HEK293T (cell line): ENCODE measurements at regions of chr16 and their contacts with region 1.

Region 1: GRCh38 chr16:2867987-2868789 is 10.2 kb upstream of the PRSS22 start:
- DNase-seq: peak; percentile 95

Region 2: DNA sequence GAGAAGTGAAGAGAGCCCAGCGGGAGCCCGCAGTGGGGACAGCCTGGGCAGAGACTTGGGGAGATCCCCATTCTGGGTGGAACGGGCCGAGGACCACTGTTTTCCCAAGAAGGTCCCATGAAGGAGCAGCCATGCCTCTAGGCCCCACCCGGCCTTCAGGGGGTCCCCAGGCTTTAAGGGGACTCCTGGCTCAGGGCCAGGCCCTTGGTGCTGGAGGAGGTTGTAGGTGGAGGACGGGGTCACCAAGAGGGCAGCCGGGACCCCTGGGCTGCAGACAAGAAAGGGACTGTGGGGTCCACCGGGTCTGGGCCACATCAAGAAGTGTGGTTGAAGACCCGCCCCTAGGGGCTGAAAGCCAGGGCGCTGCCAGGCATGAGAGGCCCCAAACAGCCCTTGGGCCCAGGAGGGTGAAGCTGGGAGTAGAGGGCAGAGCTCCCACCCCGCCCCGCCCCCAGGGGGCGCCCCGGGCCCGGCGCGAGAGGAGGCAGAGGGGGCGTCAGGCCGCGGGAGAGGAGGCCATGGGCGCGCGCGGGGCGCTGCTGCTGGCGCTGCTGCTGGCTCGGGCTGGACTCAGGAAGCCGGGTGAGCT is 51.3 kb before region 1 on chr16 and contains the start of gene PRSS21:
- CTCF ChIA-PET with region 1: no interaction called
- POLR2A ChIA-PET with region 1: no interaction called
- DNase-seq: no peak

Region 3: GRCh38 chr16:2838928-2839327 is 29.3 kb before region 1 on chr16:
- CTCF ChIA-PET with region 1: interaction called, 17 read pairs
- POLR2A ChIA-PET with region 1: interaction called, 30 read pairs
- DNase-seq: peak; percentile 75

Region 4: DNA sequence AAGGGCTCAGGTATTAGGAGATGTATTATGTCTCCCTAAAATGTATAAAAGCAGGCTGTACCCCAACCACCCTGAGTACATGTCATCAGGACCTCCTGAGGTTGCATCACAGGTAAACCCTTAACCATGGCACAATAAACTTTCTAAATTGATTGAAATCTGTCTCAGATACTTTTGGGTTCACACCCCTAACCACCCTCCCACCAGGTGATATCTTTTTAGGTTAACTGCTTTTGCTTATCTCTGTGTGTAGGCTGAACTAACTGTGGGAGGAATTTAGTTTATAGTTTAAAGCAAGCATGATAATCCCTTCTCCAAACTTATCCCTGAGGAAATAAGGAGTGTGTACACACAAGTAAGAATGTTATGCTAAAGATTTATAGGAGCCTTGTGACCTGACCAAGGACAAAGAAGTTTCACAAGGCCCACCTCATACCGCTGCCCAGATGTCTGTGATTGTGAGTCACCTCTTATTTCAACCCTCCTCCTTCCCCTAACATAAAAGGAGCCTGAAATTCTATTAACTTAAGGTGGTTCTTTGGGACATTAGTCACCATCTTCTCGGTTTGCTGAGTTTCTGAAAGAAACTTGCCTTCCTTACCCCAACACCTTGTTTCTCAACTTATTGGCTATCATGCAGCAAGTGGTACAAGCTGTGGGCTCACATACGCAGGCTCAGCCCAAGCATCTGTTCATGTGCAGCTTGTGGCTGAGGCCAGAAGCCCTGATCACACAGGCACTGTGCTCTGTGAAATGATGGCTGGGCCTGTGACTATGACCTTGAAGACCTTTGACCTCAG is 21.5 kb before region 1 on chr16:
- CTCF ChIA-PET with region 1: interaction called, 4 read pairs
- POLR2A ChIA-PET with region 1: interaction called, 14 read pairs
- DNase-seq: no peak

Region 5: GRCh38 chr16:2883027-2883851 is 15.1 kb after region 1 on chr16 and contains the start of gene FLYWCH2:
- CTCF ChIA-PET with region 1: interaction called, 10 read pairs
- POLR2A ChIA-PET with region 1: interaction called, 24 read pairs
- DNase-seq: peak; percentile 95

Region 6: GRCh38 chr16:2973093-2973492 is 104.9 kb after region 1 on chr16:
- CTCF ChIA-PET with region 1: no interaction called
- POLR2A ChIA-PET with region 1: no interaction called
- DNase-seq: no peak